ENCODE measurements at regions of chr14 and their contacts with region 1.

Region 1: GRCh38 chr14:102201796-102202195 is 62.1 kb downstream of the WDR20 start:
- DNase-seq: no peak
- ATAC-seq: peak in 1 of 4 donors; percentile 32
- H3K4me3 ChIP-seq: no peak overlapping the region
- H3K27ac ChIP-seq: no peak overlapping the region
- H3K4me1 ChIP-seq: peaks cover 0 to 14% (median 2%) of the 10 kb centered on the region in 12 donors
- H3K27me3 ChIP-seq: no peaks in the 10 kb centered on the region
- CTCF ChIP-seq: no peak
- POLR2A ChIP-seq: no peak

Region 2: DNA sequence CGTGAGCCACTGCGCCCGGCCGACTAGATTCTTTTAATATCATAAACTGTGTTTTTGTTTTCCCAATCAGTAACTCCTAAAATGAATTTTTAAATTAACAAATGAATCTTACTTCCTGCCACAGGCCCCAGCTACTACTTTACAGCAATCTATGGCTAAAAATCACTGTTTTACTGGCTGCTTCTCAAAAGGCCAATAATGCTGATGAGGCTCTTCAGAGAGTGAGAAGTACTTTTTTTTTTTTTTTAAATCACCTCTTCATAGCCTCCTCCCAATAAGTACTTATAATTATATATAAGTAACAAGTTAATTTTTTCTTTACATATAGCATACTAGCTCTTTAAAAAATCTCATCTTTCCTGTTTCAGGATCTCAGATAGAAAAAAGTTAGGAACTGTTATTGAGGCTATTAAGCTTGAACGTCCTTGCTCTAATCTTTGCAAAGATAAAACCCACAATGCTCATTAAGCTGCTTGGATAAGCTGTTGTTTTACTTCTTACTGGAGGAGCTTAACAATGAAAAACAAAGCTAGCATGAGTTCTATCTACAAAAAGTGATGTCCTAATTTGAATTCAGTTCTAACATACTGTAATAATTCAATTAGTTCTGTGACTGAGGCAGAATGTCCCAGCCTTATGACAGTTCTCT is 74.9 kb before region 1 on chr14:
- intact Hi-C with region 1: loop called in 1 of 10 experiments (anchors 2 kb)
- DNase-seq: no peak
- ATAC-seq: no peak
- H3K4me3 ChIP-seq: no peak overlapping the region
- H3K27ac ChIP-seq: no peak overlapping the region
- H3K4me1 ChIP-seq: no peaks in the 10 kb centered on the region
- H3K27me3 ChIP-seq: no peaks in the 10 kb centered on the region
- CTCF ChIP-seq: no peak
- POLR2A ChIP-seq: no peak

Measured in heart left ventricle (tissue), 16 donors.